Naive thymus-derived CD4-positive, alpha-beta T cell (primary cell): ENCODE measurements at regions of chr3 and their contacts with region 1.

Region 1: DNA sequence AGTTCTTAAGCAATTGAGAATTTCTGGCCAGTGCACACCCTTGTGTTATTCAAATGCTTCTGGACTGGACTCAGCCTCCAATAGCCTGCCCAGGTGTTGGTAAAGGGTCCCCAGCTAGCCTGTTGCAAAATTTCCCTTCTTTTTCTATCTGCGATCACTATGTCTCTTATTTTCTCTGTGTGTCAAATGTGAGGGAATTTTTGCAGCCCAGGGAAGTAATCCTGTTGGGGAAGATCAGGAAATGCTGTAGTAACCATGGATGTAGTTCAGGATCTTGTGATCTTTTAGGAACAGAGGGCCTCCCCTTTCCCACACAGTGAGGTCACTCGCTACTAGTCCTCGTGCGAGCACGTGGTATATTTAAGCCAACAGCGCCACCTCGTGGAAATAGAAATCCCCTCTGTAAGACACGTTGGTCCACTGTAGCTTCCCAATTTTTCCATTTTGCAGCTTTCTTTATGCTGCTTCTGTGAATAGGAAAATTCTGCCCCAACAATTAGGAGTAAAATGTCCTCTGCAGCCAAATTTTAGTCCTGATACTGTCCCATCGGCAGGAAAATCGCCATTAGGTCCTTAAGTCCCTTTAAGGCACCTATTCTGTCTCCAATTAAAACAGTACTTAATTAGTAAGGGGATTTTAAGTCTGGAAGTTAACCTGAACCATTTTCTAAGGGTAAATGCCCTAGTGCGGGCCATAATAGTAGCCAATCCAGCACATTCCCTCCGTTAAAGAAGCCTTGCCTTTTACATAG is 4.0 kb upstream of the SMCO1 start:
- DNase-seq: peak in 3 of 9 donors; percentile 16 to 52 (median 19)
- ATAC-seq: peak; percentile 63
- H3K4me3 ChIP-seq: no peak overlapping the region
- H3K4me3 Mint-ChIP-seq: no peak overlapping the region
- H3K27ac ChIP-seq: no peak overlapping the region
- H3K27ac Mint-ChIP-seq: no peak overlapping the region
- H3K4me1 ChIP-seq: no peaks in the 10 kb centered on the region
- H3K4me1 Mint-ChIP-seq: no peaks in the 10 kb centered on the region
- H3K27me3 ChIP-seq: no peaks in the 10 kb centered on the region
- H3K27me3 Mint-ChIP-seq: peaks cover 0 to 6% (median 0%) of the 10 kb centered on the region in 5 donors

Region 2: GRCh38 chr3:195956571-195956970 is 562.6 kb before region 1 on chr3:
- CTCF ChIA-PET with region 1: no interaction called
- POLR2A ChIA-PET with region 1: no interaction called
- intact Hi-C with region 1: no loop called
- DNase-seq: no peak
- ATAC-seq: no peak
- H3K4me3 ChIP-seq: no peak overlapping the region
- H3K4me3 Mint-ChIP-seq: no peak overlapping the region
- H3K27ac ChIP-seq: no peak overlapping the region
- H3K27ac Mint-ChIP-seq: peak overlapping the region in 1 of 9 donors; percentile 19
- H3K4me1 ChIP-seq: no peaks in the 10 kb centered on the region
- H3K4me1 Mint-ChIP-seq: peaks cover 8 to 28% (median 18%) of the 10 kb centered on the region in 7 donors
- H3K27me3 ChIP-seq: no peaks in the 10 kb centered on the region
- H3K27me3 Mint-ChIP-seq: no peaks in the 10 kb centered on the region

Region 3: GRCh38 chr3:196073188-196073838 is 445.8 kb before region 1 on chr3:
- CTCF ChIA-PET with region 1: no interaction called
- POLR2A ChIA-PET with region 1: no interaction called
- intact Hi-C with region 1: loop called in 1 of 2 experiments (anchors 1 kb)
- DNase-seq: peak; percentile 33 to 81 (median 75)
- ATAC-seq: peak; percentile 100
- H3K4me3 ChIP-seq: no peak overlapping the region
- H3K4me3 Mint-ChIP-seq: peak overlapping the region in 1 of 10 donors; percentile 44
- H3K27ac ChIP-seq: no peak overlapping the region
- H3K27ac Mint-ChIP-seq: peak overlapping the region in 6 of 9 donors; percentile 4 to 82 (median 54)
- H3K4me1 ChIP-seq: peaks cover 7% of the 10 kb centered on the region in 2 donors
- H3K4me1 Mint-ChIP-seq: peaks cover 13 to 53% (median 18%) of the 10 kb centered on the region in 7 donors
- H3K27me3 ChIP-seq: no peaks in the 10 kb centered on the region
- H3K27me3 Mint-ChIP-seq: no peaks in the 10 kb centered on the region

Region 4: DNA sequence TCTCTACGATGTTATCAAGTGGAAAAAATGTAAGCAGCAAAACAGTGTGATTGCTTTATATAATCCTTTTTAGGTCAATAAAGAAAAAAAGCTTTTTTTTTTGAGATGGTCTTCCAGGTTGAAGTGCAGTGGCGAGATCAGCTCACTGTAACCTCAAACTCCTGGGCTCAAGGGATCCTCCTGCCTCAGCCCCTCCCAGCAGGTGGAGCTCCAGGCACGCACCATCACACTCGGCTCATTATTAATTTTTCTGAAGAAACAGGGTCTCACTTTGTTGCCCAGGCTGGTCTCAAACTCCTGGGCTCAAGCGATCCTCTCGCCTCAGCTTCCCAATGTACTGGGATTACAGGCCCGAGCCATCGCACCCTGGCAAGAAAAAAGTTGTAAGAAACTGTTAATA is 32.9 kb before region 1 on chr3:
- CTCF ChIA-PET with region 1: interaction called, 4 read pairs
- POLR2A ChIA-PET with region 1: no interaction called
- intact Hi-C with region 1: loop called (anchors 1 to 2 kb)
- DNase-seq: peak in 2 of 9 donors; percentile 7 to 20
- ATAC-seq: no peak
- H3K4me3 ChIP-seq: no peak overlapping the region
- H3K4me3 Mint-ChIP-seq: no peak overlapping the region
- H3K27ac ChIP-seq: no peak overlapping the region
- H3K27ac Mint-ChIP-seq: no peak overlapping the region
- H3K4me1 ChIP-seq: no peaks in the 10 kb centered on the region
- H3K4me1 Mint-ChIP-seq: peaks cover 6 to 19% (median 15%) of the 10 kb centered on the region in 7 donors
- H3K27me3 ChIP-seq: no peaks in the 10 kb centered on the region
- H3K27me3 Mint-ChIP-seq: no peaks in the 10 kb centered on the region